ENCODE measurements at regions of chr2 and their contacts with region 1.

Region 1: DNA sequence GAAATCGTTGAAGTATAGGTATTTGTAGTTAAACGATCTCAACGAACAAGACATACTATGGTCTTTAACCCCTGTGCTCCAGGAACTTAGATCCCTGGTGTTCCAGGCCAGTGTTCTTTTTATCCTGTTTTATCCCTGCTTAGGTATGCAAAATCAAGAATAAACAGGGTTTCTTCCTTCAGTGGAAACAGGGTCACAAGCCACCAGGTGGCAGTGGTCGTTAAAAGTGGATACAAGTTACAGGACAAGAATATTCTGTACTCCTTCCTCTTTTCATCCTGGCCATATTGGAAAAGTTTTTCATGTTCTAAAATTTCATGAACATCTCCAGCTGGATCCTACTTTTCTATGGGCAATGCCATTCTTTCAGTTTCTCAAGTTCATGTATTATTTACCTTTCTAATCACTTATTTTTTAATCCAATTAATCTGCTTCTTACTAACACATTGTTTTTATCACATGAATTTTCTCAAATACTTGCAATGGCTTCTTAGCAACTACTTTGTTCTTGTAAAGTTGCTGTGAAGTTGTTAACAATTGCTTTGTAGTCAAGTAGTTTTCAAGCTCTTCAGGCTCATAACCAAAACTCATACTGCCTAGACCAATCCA is 16.4 kb upstream of the HNMT start:
- DNase-seq: peak; percentile 77 to 88
- H3K4me3 ChIP-seq: no peak overlapping the region
- H3K27ac ChIP-seq: no peak overlapping the region
- H3K4me1 ChIP-seq: peaks cover 0 to 3% (median 0%) of the 10 kb centered on the region in 4 donors
- H3K27me3 ChIP-seq: no peaks in the 10 kb centered on the region
- CTCF ChIP-seq: peak; percentile 59 to 69

Region 2: DNA sequence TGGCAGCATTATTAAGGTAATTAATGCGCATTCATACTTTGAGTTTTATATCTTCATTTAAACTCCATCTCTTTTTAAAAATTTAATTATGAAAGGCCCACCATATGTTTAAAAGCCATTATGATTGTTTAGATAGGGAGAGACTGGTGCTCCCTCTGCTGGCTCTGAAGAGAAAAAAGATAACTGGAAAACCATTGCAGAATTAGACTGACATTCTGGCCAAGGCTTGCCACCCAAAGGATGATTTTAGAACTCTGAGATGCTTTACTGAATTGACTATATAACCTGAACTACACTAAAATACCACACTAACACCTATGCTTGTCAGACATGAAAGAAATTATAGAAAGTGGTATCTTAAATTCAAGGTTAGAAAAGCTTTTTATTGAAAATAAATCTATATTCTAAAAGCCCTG is 426.2 kb after region 1 on chr2:
- intact Hi-C with region 1: loop called (anchors 5 kb)
- DNase-seq: no peak
- H3K4me3 ChIP-seq: no peak overlapping the region
- H3K27ac ChIP-seq: no peak overlapping the region
- H3K4me1 ChIP-seq: peaks cover 0 to 38% (median 0%) of the 10 kb centered on the region in 4 donors
- H3K27me3 ChIP-seq: no peaks in the 10 kb centered on the region
- CTCF ChIP-seq: peak; percentile 71 to 73